Ascending aorta (tissue), 2 donors: ENCODE measurements at regions of chr22 and their contacts with region 1.

Region 1: DNA sequence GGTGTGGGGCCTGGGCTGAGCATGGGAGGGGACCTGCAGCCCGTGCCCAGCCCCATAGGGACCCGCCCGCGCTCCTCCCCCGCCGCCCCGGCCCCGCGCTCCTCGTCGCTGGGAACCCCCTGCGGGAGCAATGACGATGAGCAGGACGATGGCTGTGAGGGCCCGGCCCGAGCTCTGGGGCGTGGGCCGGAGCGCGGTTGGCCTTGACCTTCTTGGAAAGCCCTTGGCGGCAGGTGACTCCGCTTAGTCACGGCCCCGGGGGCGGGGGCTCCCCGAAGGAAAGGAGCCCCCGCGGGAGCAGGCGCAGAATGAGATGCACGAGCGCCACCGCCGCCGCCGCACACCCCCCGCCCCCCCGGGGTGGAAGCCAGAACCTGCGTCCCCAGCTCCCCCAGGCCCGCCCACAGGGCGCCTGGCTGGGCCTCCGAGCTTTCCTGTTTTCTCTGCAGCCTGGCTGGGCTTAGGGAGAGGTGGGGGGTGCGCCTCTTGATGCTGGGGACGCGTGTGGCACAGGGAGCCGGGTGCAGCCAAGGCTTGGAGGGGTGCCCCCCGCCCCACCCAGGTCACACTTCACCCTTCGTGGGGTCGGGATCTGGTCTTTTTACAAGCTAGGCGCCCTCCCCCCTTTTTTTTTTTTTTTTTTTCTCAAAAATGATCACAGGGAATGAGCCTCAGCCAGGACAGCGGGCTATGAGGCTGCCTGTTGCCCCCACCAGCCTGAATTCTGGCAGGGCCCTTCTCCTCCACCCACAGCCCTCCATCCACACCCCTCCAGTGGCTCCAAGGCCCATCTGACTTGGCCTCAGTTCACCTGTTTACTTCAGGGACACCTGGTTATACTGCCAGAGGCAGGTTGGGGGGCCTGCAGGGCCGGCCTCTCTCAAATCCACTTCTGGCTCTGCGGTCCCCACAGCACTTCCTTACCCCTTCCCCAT is 17.9 kb downstream of the CRELD2 start:
- DNase-seq: peak; percentile 87 to 97
- H3K4me3 ChIP-seq: peak overlapping the region; percentile 51 to 72
- H3K27ac ChIP-seq: peak overlapping the region; percentile 86 to 98
- H3K4me1 ChIP-seq: peaks cover 15 to 39% of the 10 kb centered on the region in 2 donors
- H3K27me3 ChIP-seq: no peaks in the 10 kb centered on the region
- CTCF ChIP-seq: no peak

Region 2: GRCh38 chr22:49880281-49880680 is 56.0 kb before region 1 on chr22:
- intact Hi-C with region 1: no loop called
- DNase-seq: no peak
- H3K4me3 ChIP-seq: no peak overlapping the region
- H3K27ac ChIP-seq: no peak overlapping the region
- H3K4me1 ChIP-seq: no peaks in the 10 kb centered on the region
- H3K27me3 ChIP-seq: no peaks in the 10 kb centered on the region
- CTCF ChIP-seq: no peak

Region 3: GRCh38 chr22:49960159-49961004 is 24.1 kb after region 1 on chr22 and contains the start of gene PIM3:
- intact Hi-C with region 1: loop called (anchors 1 kb)
- DNase-seq: peak; percentile 79 to 96
- H3K4me3 ChIP-seq: peak within 1 kb of the TSS; percentile 85 to 89
- H3K27ac ChIP-seq: peak within 1 kb of the TSS; percentile 88 to 96
- H3K4me1 ChIP-seq: peaks cover 0 to 18% of the 10 kb centered on the region in 2 donors
- H3K27me3 ChIP-seq: no peaks in the 10 kb centered on the region
- CTCF ChIP-seq: peak in 1 of 3 experiments; percentile 33
- total RNA-seq, gene PIM3: 269 TPM

Region 4: DNA sequence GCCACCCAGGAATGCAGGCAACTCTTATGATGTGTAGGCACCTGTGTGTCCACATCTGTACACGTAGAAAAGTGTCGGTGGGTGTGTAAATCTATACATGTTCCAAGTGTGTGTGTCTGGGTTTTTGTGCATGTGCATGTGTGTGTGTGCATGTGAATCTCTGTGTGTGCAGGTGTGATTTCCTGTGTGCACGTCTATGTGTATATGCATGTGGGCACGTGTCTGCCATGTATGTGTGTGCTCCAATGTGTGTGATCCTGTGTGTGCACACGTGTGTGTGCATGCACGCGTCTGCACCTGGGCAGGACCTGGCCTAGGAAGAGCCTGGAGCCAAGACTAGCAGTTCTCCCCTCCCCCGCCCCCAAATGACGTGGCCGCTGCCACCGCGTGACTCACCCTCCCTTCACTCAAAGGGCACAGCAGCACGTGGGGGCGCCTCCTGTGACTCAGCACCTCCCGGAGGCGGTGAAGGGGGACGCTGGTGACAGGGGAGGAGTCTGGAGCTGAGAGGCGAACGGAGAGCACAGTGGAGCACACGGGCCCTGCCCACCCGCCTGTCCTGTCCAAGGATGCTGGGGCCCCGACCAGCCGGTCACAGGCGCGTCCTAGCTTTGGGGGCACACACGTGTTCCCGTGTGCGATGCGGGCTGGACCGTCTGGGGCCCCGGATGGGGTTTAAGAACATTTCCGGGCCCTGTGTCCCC is 34.4 kb after region 1 on chr22:
- intact Hi-C with region 1: loop called (anchors 2 kb)
- DNase-seq: peak; percentile 95 to 98
- H3K4me3 ChIP-seq: peak overlapping the region; percentile 62 to 75
- H3K27ac ChIP-seq: peak overlapping the region; percentile 77 to 79
- H3K4me1 ChIP-seq: peaks cover 9 to 40% of the 10 kb centered on the region in 2 donors
- H3K27me3 ChIP-seq: no peaks in the 10 kb centered on the region
- CTCF ChIP-seq: no peak